ENCODE measurements at regions of chr10 and their contacts with region 1.

Region 1: DNA sequence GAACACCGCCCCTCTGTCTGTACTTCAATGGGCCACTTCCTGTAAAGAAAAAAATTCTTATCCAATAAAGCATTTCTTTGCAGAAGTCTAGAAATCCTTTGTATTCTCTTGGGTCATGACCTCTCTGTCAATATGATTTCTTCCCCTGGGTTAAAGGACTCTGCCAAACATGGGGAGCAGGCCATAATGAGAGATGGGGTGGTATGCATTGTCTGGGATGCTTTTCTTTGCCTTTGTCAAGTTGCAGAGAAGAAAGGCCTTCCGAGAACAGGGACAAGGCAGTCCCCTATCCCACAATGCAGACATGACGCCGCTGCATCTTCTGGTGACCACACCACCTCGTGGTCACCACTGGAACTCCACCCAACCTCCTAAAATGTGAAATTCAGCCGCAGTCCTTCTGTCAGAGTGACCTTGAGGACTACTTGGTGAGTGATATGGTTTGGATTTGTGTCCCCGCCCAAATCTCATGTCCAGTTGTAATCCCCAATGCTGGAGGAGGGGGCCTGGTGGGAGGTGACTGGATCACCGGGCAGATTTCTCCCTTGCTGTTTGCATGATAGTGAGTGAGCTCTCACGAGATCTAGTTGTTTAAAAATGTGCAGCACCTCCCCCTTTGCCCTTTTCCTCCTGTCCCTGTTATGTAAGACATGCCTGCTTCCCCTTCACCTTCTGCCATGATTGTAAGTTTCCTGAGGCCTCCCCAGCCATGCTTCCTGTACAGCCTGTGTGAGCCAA is 15.2 kb upstream of the FRMPD2 start:
- DNase-seq: peak; percentile 50 to 65
- H3K4me3 ChIP-seq: no peak overlapping the region
- H3K27ac ChIP-seq: no peak overlapping the region
- H3K4me1 ChIP-seq: peaks cover 15% of the 10 kb centered on the region
- H3K27me3 ChIP-seq: peaks cover 20% of the 10 kb centered on the region
- CTCF ChIP-seq: peak; percentile 94

Region 2: GRCh38 chr10:48215488-48216204 is 74.0 kb before region 1 on chr10:
- CTCF ChIA-PET with region 1: no interaction called
- POLR2A ChIA-PET with region 1: no interaction called
- intact Hi-C with region 1: loop called (anchors 1 kb)
- DNase-seq: peak; percentile 54 to 76
- H3K4me3 ChIP-seq: no peak overlapping the region
- H3K27ac ChIP-seq: no peak overlapping the region
- H3K4me1 ChIP-seq: no peaks in the 10 kb centered on the region
- H3K27me3 ChIP-seq: peaks cover 37% of the 10 kb centered on the region; the same call in 1 of the 2 replicates
- CTCF ChIP-seq: peak; percentile 94

Region 3: DNA sequence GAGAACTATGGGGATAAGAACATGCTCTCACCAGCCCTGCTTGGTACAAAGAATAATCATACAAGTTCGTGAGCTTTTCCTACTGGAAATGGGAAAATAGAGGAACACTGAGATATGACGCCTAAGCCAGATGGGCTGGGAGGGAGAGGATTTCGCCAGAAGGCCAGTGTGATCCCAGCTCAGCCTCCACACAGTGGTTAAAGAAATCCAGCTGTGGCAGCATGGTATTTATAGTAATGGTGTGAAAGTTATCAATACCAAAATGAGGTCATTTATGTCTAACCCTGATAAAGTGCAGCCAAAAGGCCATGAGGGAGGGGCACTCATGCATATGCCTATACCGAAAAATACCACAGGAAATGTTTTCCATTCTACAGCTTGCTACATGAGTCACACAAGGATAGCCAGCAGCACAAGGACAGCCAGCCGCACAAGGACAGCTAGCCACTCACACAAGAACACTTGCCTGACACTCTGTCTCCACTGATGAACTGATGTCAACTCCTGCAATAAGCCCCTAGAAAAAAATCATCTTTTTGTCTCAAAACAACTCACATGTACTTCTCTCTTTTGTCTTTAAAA is 64.6 kb before region 1 on chr10:
- CTCF ChIA-PET with region 1: no interaction called
- POLR2A ChIA-PET with region 1: no interaction called
- intact Hi-C with region 1: loop called (anchors 2 kb)
- DNase-seq: no peak
- H3K4me3 ChIP-seq: no peak overlapping the region
- H3K27ac ChIP-seq: no peak overlapping the region
- H3K4me1 ChIP-seq: no peaks in the 10 kb centered on the region
- H3K27me3 ChIP-seq: peaks cover 13% of the 10 kb centered on the region; the same call in 1 of the 2 replicates
- CTCF ChIP-seq: no peak

Region 4: DNA sequence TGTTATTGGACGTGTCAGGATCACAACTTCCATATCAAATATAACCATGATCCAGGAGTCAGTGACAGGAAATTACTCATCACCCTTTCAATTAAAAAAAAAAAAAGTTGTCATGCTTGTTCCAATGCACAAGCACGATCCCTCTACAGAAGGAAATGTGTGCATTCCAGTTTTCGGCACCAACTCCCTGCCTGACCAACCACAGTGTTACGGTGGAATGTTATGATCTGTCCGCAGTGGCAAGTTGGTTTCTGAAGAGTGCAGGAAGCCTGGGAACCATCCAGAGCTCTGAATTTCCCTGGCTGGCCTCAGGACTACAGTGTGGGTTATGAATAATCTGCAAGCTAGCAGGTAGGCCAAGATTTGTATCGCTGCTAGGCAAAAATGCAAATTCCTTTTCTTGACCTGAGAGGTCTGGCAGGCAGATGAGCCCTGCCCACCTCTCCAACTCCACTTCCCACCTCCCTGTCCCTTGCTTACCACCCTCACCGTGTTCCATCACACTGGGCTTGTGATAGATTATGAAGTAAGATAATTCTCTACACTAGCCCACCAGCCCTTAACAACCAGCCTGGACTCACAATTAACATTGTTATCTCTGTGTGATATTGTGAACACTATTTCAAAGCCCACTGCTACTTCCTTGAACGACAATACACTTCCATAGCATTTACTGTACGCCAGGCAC is 35.6 kb before region 1 on chr10:
- CTCF ChIA-PET with region 1: no interaction called
- POLR2A ChIA-PET with region 1: no interaction called
- intact Hi-C with region 1: loop called (anchors 1 kb)
- DNase-seq: peak; percentile 85 to 94
- H3K4me3 ChIP-seq: peak overlapping the region; percentile 6; the same call in 1 of the 2 replicates
- H3K27ac ChIP-seq: peak overlapping the region; percentile 70
- H3K4me1 ChIP-seq: peaks cover 31% of the 10 kb centered on the region
- H3K27me3 ChIP-seq: no peaks in the 10 kb centered on the region
- CTCF ChIP-seq: no peak

Region 5: GRCh38 chr10:48306265-48306869 is 16.7 kb after region 1 on chr10 and contains the start of gene MAPK8:
- CTCF ChIA-PET with region 1: interaction called, 4 read pairs
- POLR2A ChIA-PET with region 1: interaction called, 3 read pairs
- intact Hi-C with region 1: loop called (anchors 2 kb)
- DNase-seq: peak; percentile 77 to 96
- H3K4me3 ChIP-seq: peak within 1 kb of the TSS; percentile 85
- H3K27ac ChIP-seq: peak within 1 kb of the TSS; percentile 14; the same call in 1 of the 2 replicates
- H3K4me1 ChIP-seq: peaks cover 45% of the 10 kb centered on the region
- H3K27me3 ChIP-seq: no peaks in the 10 kb centered on the region
- CTCF ChIP-seq: no peak
- total RNA-seq, gene MAPK8: 67.5 and 72.1 TPM in 2 replicates